ENCODE measurements at regions of chr15 and their contacts with region 1.

Region 1: DNA sequence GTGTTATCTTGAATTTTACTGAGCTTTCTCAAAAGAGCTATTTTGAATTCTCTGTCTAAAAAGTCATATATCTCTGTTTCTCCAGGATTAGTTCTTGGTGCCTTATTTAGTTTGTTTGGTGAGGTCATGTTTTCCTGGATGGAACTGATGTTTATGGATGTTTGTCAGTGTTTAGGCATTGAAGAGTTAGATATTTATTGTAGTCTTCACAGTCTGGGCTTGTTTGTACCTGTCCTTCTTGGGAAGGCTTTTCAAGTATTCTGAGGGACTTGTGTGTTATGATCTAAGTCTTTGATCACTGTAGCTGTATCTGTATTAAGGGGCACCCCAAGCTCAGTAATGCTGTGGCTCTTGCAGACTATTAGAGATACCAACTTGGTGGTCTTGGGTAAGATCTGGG is 10.6 kb upstream of the RAD51 start:
- DNase-seq: no peak
- ATAC-seq: no peak
- H3K4me3 ChIP-seq: no peak overlapping the region
- H3K27ac ChIP-seq: no peak overlapping the region
- H3K4me1 ChIP-seq: no peaks in the 10 kb centered on the region
- H3K27me3 ChIP-seq: no peaks in the 10 kb centered on the region
- CTCF ChIP-seq: no peak
- EP300 ChIP-seq: no peak
- POLR2A ChIP-seq: no peak
- RAD21 ChIP-seq: no peak

Region 2: GRCh38 chr15:40506964-40507571 is 177.3 kb before region 1 on chr15:
- CTCF ChIA-PET with region 1: no interaction called
- POLR2A ChIA-PET with region 1: no interaction called
- RAD21 ChIA-PET with region 1: no interaction called
- SMC1A ChIA-PET with region 1: no interaction called
- in situ Hi-C with region 1: no loop called
- intact Hi-C with region 1: loop called (anchors 10 kb)
- DNase-seq: no peak
- ATAC-seq: peak; percentile 65
- H3K4me3 ChIP-seq: no peak overlapping the region
- H3K27ac ChIP-seq: no peak overlapping the region
- H3K4me1 ChIP-seq: peaks cover 9% of the 10 kb centered on the region
- H3K27me3 ChIP-seq: no peaks in the 10 kb centered on the region
- CTCF ChIP-seq: peak; percentile 65 to 82 (median 73)
- EP300 ChIP-seq: no peak
- POLR2A ChIP-seq: no peak
- RAD21 ChIP-seq: peak; percentile 61